ENCODE measurements at regions of chr4 and their contacts with region 1.

Region 1: GRCh38 chr4:77358315-77358928 is 201.4 kb downstream of the CCNG2 start:
- DNase-seq: no peak
- ATAC-seq: peak; percentile 66
- H3K4me3 Mint-ChIP-seq: no peak overlapping the region
- H3K27ac Mint-ChIP-seq: no peak overlapping the region
- H3K4me1 Mint-ChIP-seq: no peaks in the 10 kb centered on the region
- H3K27me3 Mint-ChIP-seq: peaks cover 5% of the 10 kb centered on the region

Region 2: DNA sequence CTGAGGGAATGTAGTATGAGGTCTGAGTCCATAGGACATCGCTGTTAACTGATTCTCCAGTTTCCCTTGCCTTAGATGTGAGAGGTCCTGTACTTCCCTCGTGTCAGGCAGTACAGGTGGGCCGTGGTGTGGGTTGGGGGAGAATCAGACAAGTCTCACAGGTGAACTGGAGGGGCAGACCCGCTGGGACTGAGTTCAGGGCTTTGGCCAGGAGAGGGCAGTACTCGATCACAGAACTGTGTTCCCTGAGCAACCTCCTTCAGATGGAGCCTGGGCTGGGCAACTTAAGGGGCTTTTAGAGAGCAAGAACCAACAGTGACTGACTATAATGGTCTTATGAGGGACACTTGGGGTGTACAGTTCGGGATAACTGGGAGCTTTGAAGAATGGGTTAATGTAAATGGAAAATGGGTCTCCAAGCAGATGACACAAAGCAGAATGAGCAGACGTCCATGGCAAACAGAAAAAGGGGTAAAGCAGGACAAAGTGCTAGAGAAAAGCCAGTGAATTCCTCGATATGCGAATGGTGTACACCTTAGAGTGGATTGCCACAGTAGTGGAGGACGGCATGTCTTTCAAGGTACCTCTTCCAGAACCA is 117.9 kb before region 1 on chr4:
- CTCF ChIA-PET with region 1: interaction called, 19 read pairs
- DNase-seq: peak; percentile 77
- ATAC-seq: peak; percentile 80
- H3K4me3 Mint-ChIP-seq: no peak overlapping the region
- H3K27ac Mint-ChIP-seq: no peak overlapping the region
- H3K4me1 Mint-ChIP-seq: peaks cover 3% of the 10 kb centered on the region
- H3K27me3 Mint-ChIP-seq: peaks cover 18% of the 10 kb centered on the region

Region 3: GRCh38 chr4:77376788-77377460 is 18.5 kb after region 1 on chr4:
- CTCF ChIA-PET with region 1: interaction called, 12 read pairs
- DNase-seq: no peak
- ATAC-seq: no peak
- H3K4me3 Mint-ChIP-seq: no peak overlapping the region
- H3K27ac Mint-ChIP-seq: no peak overlapping the region
- H3K4me1 Mint-ChIP-seq: peaks cover 11% of the 10 kb centered on the region
- H3K27me3 Mint-ChIP-seq: peaks cover 21% of the 10 kb centered on the region

Measured in activated CD8-positive, alpha-beta memory T cell treated with anti-CD3 and anti-CD28 coated beads, Interleukin-2, amount 10 ng/mL, durations not matched to agents 7 days and 5 days (primary cell).